PC-3 (cell line): ENCODE measurements at regions of chr10 and their contacts with region 1.

Region 1: GRCh38 chr10:34637418-34637911 is 177.6 kb downstream of the PARD3 start:
- DNase-seq: peak; percentile 91
- ATAC-seq: peak; percentile 48
- H3K4me3 ChIP-seq: no peak overlapping the region
- H3K27ac ChIP-seq: no peak overlapping the region
- H3K4me1 ChIP-seq: peaks cover 18% of the 10 kb centered on the region
- H3K27me3 ChIP-seq: no peaks in the 10 kb centered on the region
- CTCF ChIP-seq: peak; percentile 100

Region 2: DNA sequence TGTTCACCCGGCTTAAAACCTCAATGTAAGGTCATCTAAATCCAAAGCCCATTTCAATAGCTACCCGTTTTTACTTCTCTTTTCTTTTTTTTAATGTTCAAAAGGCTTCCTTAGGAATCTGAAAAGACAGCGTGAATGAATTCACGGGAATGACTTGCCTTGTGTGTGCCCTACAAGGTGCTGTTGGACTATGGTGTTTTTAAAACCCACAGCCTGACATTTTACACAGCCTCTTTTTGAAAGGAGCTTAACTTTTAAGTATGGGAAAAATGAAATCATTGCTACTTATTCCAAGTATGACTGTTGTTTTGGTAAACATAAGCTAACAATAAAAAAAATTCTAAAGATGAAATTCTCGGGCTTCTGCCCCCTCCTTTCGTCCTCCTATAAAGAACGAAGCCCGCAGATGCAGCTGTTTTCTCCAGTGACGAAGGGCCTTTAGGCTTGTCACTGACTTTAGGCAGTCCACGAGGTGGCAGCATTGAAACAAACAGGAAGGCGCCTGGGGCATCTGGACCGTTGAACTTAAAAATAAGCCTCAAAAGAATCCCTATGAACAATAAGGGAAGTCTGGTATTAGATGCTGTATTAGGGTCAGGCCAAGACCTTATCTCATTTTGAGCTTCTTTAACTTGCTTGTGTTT is 1444.3 kb before region 1 on chr10:
- CTCF ChIA-PET with region 1: interaction called, 4 read pairs
- POLR2A ChIA-PET with region 1: no interaction called
- intact Hi-C with region 1: loop called (anchors 1 kb)
- DNase-seq: peak; percentile 100
- ATAC-seq: peak; percentile 74
- H3K4me3 ChIP-seq: no peak overlapping the region
- H3K27ac ChIP-seq: peak overlapping the region; percentile 72
- H3K4me1 ChIP-seq: peaks cover 54% of the 10 kb centered on the region
- H3K27me3 ChIP-seq: no peaks in the 10 kb centered on the region
- CTCF ChIP-seq: no peak

Region 3: GRCh38 chr10:34187201-34187600 is 450.3 kb before region 1 on chr10:
- CTCF ChIA-PET with region 1: no interaction called
- POLR2A ChIA-PET with region 1: no interaction called
- intact Hi-C with region 1: loop called (anchors 5 kb)
- DNase-seq: no peak
- ATAC-seq: no peak
- H3K4me3 ChIP-seq: no peak overlapping the region
- H3K27ac ChIP-seq: no peak overlapping the region
- H3K4me1 ChIP-seq: peaks cover 19% of the 10 kb centered on the region
- H3K27me3 ChIP-seq: no peaks in the 10 kb centered on the region
- CTCF ChIP-seq: no peak

Region 4: GRCh38 chr10:34262985-34263384 is 374.5 kb before region 1 on chr10:
- CTCF ChIA-PET with region 1: no interaction called
- POLR2A ChIA-PET with region 1: no interaction called
- intact Hi-C with region 1: loop called (anchors 1 kb)
- DNase-seq: peak; percentile 71
- ATAC-seq: peak; percentile 68
- H3K4me3 ChIP-seq: no peak overlapping the region
- H3K27ac ChIP-seq: no peak overlapping the region
- H3K4me1 ChIP-seq: no peaks in the 10 kb centered on the region
- H3K27me3 ChIP-seq: no peaks in the 10 kb centered on the region
- CTCF ChIP-seq: peak; percentile 96

Region 5: GRCh38 chr10:34374356-34375045 is 263.0 kb before region 1 on chr10:
- CTCF ChIA-PET with region 1: no interaction called
- POLR2A ChIA-PET with region 1: no interaction called
- intact Hi-C with region 1: loop called (anchors 10 kb)
- DNase-seq: no peak
- ATAC-seq: no peak
- H3K4me3 ChIP-seq: no peak overlapping the region
- H3K27ac ChIP-seq: no peak overlapping the region
- H3K4me1 ChIP-seq: no peaks in the 10 kb centered on the region
- H3K27me3 ChIP-seq: no peaks in the 10 kb centered on the region
- CTCF ChIP-seq: no peak

Region 6: DNA sequence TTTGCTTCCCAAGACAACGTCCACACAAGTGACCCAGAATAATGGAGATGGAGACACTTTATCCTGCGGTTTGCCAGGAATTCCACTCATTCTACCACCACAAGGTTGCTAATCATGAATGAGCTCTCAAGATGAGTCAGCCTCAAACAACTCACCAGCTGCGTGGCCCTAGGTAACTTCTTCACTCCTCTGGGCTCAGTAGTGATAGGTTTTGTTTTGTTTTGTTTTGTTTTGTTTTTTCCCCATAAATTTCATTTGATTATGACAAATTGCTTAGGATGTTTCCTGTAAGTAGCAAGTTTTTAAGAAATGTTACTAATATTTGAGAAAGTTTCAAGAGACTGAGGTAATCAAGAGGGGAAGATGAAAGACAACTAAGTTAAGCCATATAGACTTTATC is 109.1 kb before region 1 on chr10:
- CTCF ChIA-PET with region 1: interaction called, 13 read pairs
- POLR2A ChIA-PET with region 1: interaction called, 7 read pairs
- intact Hi-C with region 1: loop called (anchors 1 kb)
- DNase-seq: peak; percentile 100
- ATAC-seq: peak; percentile 75
- H3K4me3 ChIP-seq: peak overlapping the region; percentile 23
- H3K27ac ChIP-seq: peak overlapping the region; percentile 85
- H3K4me1 ChIP-seq: peaks cover 55% of the 10 kb centered on the region
- H3K27me3 ChIP-seq: no peaks in the 10 kb centered on the region
- CTCF ChIP-seq: no peak

Region 7: GRCh38 chr10:34593930-34594329 is 43.5 kb before region 1 on chr10:
- CTCF ChIA-PET with region 1: no interaction called
- POLR2A ChIA-PET with region 1: no interaction called
- intact Hi-C with region 1: no loop called
- DNase-seq: no peak
- ATAC-seq: no peak
- H3K4me3 ChIP-seq: no peak overlapping the region
- H3K27ac ChIP-seq: no peak overlapping the region
- H3K4me1 ChIP-seq: no peaks in the 10 kb centered on the region
- H3K27me3 ChIP-seq: no peaks in the 10 kb centered on the region
- CTCF ChIP-seq: no peak